Heart left ventricle (tissue), 16 donors: ENCODE measurements at regions of chr7 and their contacts with region 1.

Region 1: DNA sequence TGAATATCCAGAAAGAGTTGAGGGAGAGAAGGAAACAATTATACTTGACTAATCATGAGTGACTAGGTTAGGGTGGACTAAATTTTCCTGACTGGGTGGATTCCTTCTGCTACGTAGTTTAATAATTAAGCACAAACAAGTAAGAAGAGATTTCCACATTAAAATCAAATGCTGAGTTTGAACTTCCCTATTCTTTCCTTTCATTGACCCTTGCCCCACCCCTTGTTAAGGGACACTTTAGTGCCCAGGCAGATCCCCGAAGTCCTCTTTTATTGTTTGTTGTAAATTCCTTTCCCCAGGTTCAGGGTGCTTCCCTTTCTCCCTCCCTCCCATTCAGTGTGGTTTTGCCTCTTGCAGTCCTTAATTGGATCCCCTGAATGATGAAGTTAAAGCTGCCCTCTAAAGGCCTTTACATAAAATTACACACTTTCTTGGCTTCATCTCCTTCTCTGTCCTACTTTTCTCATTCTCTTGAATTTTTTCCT is 8.8 kb upstream of the SPAM1 start:
- DNase-seq: no peak
- ATAC-seq: peak in 2 of 4 donors; percentile 38 to 41
- H3K4me3 ChIP-seq: no peak overlapping the region
- H3K27ac ChIP-seq: no peak overlapping the region
- H3K4me1 ChIP-seq: no peaks in the 10 kb centered on the region
- H3K27me3 ChIP-seq: no peaks in the 10 kb centered on the region
- CTCF ChIP-seq: peak in 10 of 12 donors; percentile 8 to 43 (median 28)
- POLR2A ChIP-seq: no peak

Region 2: GRCh38 chr7:123682690-123683089 is 233.6 kb before region 1 on chr7:
- intact Hi-C with region 1: no loop called
- DNase-seq: no peak
- ATAC-seq: peak in 2 of 4 donors; percentile 24 to 40
- H3K4me3 ChIP-seq: no peak overlapping the region
- H3K27ac ChIP-seq: peak overlapping the region in 3 of 12 donors; percentile 54 to 73 (median 61)
- H3K4me1 ChIP-seq: peaks cover 0 to 41% (median 16%) of the 10 kb centered on the region in 12 donors
- H3K27me3 ChIP-seq: no peaks in the 10 kb centered on the region
- CTCF ChIP-seq: peak; percentile 31 to 70 (median 57)
- POLR2A ChIP-seq: no peak

Region 3: DNA sequence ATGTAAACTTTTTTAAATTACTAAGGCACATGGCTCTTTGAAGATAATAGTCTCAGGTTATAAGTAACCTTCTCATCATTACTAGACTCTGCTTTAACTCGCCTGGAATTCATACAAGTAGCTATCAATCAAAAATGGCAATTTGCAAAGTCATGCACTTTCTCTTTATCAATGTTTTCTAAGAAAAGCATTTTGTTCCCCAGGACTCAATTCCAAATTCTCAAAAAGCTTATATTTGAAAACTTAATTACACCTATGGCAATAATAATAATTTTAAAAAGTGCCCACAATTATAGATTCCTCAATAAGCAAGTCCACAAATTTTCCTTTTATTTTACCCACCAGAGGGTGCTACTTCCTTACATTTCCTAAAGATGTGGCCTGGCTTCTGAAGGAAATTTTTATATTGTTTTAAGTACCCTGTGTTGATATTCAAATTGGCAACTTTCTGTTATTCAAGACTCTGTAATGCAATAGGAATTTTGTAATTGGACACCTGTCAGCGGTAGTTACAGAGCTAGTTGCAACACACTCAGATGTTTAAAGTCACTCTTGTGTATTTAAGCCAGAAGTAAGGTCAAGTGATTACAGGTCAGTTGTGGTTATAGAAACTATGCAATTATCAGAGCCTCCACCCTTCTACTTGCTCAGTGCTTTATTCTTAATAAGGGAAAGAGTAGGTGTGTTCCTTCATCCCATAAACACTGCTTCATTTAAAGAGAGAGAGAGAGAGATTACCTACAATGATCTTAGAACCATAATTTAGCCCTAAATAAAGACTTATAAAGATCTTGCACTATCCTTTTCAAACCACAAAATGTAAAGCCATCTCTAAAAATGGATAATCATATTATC is 118.4 kb before region 1 on chr7:
- intact Hi-C with region 1: loop called in 1 of 10 experiments (anchors 2 kb)
- DNase-seq: no peak
- ATAC-seq: peak in 2 of 4 donors; percentile 49 to 59
- H3K4me3 ChIP-seq: no peak overlapping the region
- H3K27ac ChIP-seq: no peak overlapping the region
- H3K4me1 ChIP-seq: peaks cover 0 to 6% (median 0%) of the 10 kb centered on the region in 12 donors
- H3K27me3 ChIP-seq: no peaks in the 10 kb centered on the region
- CTCF ChIP-seq: peak; percentile 33 to 69 (median 64)
- POLR2A ChIP-seq: no peak